ENCODE measurements at regions of chr4 and their contacts with region 1.

Region 1: GRCh38 chr4:10089346-10089745 is 27.3 kb downstream of the WDR1 start:
- DNase-seq: peak in 2 of 9 experiments; percentile 24 to 25
- ATAC-seq: no peak
- H3K4me3 ChIP-seq: no peak overlapping the region
- H3K4me3 Mint-ChIP-seq: no peak overlapping the region
- H3K27ac ChIP-seq: no peak overlapping the region
- H3K27ac Mint-ChIP-seq: peak overlapping the region; percentile 18
- H3K4me1 ChIP-seq: peaks cover 29% of the 10 kb centered on the region
- H3K4me1 Mint-ChIP-seq: peaks cover 47% of the 10 kb centered on the region
- H3K27me3 ChIP-seq: no peaks in the 10 kb centered on the region
- H3K27me3 Mint-ChIP-seq: no peaks in the 10 kb centered on the region
- CTCF ChIP-seq: peak; percentile 32

Region 2: DNA sequence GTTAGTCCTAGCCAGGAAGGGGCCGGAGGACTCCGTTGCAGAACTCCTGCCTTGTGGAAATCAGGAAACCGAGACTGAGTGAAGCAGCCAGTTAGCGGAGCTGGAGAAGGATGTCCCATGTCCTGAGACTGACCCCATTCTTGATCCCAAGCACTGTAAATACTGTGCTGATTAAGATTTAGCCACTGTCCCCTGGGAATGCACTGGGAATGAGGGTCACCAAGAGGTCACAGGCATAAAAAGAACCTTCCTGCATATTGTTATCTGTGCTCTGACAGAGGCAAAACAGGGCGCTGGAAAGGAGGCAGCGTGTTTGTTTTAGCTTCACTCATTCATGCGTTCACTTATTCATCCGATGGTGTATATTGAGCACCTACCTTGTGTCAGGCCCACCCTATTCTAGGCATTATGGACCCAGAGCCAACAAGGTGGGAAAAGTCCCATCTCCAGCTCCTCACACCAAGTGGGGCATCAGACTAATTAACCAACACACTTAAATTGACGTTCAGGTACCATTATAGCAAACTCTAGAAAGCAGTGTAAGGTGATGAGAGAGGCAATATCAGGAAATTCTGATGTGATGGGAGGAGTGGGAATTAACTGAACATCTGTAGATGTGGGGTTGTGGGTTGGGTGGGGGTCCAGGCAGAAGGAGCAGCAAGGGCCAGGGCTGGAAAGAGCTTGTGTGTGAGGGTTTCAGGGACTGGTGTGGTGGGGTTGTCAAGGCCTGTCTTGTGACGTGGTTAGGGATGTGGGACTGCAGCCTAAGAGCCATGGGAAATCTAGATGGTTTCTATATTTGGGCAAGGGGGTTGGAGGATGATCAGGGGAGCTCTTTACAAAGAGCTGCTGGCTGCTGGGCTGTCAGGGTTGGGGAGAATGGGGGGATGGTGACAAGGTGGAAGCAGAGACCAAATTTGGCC is 57.4 kb before region 1 on chr4:
- CTCF ChIA-PET with region 1: no interaction called
- POLR2A ChIA-PET with region 1: no interaction called
- intact Hi-C with region 1: no loop called
- DNase-seq: no peak
- ATAC-seq: no peak
- H3K4me3 ChIP-seq: no peak overlapping the region
- H3K4me3 Mint-ChIP-seq: no peak overlapping the region
- H3K27ac ChIP-seq: no peak overlapping the region
- H3K27ac Mint-ChIP-seq: no peak overlapping the region
- H3K4me1 ChIP-seq: no peaks in the 10 kb centered on the region
- H3K4me1 Mint-ChIP-seq: peaks cover 5% of the 10 kb centered on the region
- H3K27me3 ChIP-seq: no peaks in the 10 kb centered on the region
- H3K27me3 Mint-ChIP-seq: peaks cover 5% of the 10 kb centered on the region
- CTCF ChIP-seq: no peak

Region 3: DNA sequence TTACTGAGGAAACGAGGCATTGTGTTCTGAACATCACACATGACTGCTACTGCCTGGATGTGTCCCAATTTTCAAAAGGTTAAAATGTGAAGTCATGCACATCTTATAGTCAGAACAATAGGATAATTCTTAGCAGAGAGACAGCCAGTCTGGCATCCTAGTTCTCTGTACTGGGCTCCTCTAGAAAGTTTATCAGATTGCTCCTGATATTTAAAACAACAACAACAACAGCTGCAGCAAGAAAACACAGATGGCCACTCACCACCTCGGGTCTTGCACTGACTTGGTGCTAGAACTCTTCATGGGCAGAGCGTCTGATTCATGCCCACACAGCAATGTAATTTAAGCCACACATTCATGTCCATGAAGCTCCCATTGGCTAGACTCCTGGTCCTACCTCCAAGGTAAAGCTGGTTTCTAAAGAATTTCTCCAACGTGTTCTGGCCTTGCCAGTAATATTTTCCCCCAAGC is 34.7 kb before region 1 on chr4:
- CTCF ChIA-PET with region 1: no interaction called
- POLR2A ChIA-PET with region 1: no interaction called
- intact Hi-C with region 1: no loop called
- DNase-seq: peak in 1 of 9 experiments; percentile 15
- ATAC-seq: no peak
- H3K4me3 ChIP-seq: no peak overlapping the region
- H3K4me3 Mint-ChIP-seq: no peak overlapping the region
- H3K27ac ChIP-seq: no peak overlapping the region
- H3K27ac Mint-ChIP-seq: no peak overlapping the region
- H3K4me1 ChIP-seq: no peaks in the 10 kb centered on the region
- H3K4me1 Mint-ChIP-seq: peaks cover 4% of the 10 kb centered on the region
- H3K27me3 ChIP-seq: no peaks in the 10 kb centered on the region
- H3K27me3 Mint-ChIP-seq: no peaks in the 10 kb centered on the region
- CTCF ChIP-seq: no peak

Region 4: DNA sequence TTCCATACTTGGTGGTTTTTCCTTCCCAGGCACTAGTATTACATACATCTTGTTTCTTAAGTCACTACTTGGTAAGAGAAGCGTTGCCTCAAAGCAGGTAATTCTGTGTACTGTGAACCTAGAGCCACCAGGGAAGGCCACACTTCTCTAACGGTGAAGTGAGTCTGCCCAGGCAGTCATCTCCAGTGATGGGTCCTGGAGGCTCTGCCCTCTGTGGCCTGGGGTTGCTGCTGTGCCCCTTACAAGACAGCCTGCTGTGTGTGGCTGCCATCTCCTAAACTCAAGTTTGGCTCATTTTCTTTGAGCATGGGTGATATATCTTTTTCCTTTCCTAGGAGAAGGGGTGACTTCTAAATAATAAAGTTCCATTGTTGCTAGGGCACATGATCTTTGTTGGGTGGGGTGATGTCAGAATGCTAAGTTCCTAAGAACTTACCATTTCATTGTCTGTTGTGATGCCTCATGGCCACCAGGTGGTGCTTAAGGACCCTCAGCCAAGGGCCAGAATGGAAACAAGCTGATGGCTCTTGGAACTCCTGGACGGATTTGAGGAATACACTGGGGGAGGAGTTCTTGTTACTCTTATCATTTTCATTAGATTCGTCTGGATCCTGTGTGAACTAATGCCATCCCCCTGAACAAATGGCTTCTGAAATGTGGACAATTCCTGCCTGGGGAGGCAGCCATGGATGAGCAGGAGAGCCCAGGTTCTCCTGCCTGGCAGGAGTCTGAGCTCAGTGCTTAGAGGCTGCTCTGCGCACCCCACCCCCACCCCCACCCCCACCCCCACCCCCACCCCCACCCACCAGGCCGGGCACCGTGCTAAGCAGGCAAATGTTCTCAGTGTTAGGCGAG is 68.4 kb after region 1 on chr4:
- CTCF ChIA-PET with region 1: interaction called, 3 read pairs
- POLR2A ChIA-PET with region 1: no interaction called
- intact Hi-C with region 1: loop called in 1 of 2 experiments (anchors 5 kb)
- DNase-seq: peak in 7 of 9 experiments; percentile 14 to 65 (median 27)
- ATAC-seq: peak; percentile 48
- H3K4me3 ChIP-seq: no peak overlapping the region
- H3K4me3 Mint-ChIP-seq: no peak overlapping the region
- H3K27ac ChIP-seq: no peak overlapping the region
- H3K27ac Mint-ChIP-seq: peak overlapping the region; percentile 55
- H3K4me1 ChIP-seq: peaks cover 43% of the 10 kb centered on the region
- H3K4me1 Mint-ChIP-seq: peaks cover 43% of the 10 kb centered on the region
- H3K27me3 ChIP-seq: no peaks in the 10 kb centered on the region
- H3K27me3 Mint-ChIP-seq: no peaks in the 10 kb centered on the region
- CTCF ChIP-seq: peak; percentile 54